ENCODE measurements at regions of chr5 and their contacts with region 1.

Region 1: DNA sequence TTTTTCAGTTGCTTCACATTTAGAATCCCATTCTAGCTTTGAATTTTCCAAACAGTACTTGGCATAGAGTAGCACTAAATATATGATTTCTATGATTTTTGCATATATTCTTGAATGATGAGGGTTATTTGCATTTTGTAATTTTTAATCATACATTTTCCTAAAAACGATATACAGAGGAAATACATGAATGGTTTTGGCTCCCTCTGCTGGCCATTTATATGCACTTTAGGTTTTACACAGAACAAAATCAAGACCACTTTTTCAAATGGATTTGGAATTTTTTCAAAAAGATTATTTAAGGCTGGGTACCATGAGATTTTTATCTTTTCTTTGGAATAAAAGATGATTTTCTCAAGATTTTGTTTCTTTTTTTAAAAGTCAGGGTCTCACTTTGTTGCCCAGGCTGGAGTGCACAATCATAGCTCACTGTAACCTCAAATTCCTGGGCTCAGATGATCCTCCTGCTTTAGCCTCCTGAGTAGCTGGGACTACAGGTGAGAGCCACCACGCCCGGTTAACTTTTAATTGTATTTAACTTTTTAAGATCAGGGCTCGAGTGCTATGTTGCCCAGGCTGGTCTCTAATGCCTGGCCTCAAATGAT is 16.7 kb upstream of the COMMD10 start:
- DNase-seq: peak; percentile 32
- H3K4me3 ChIP-seq: no peak overlapping the region; a peak in 1 of 4 replicates
- H3K27ac ChIP-seq: no peak overlapping the region
- H3K4me1 ChIP-seq: no peaks in the 10 kb centered on the region
- H3K27me3 ChIP-seq: no peaks in the 10 kb centered on the region
- CTCF ChIP-seq: peak; percentile 92
- EP300 ChIP-seq: no peak
- RAD21 ChIP-seq: peak; percentile 84

Region 2: DNA sequence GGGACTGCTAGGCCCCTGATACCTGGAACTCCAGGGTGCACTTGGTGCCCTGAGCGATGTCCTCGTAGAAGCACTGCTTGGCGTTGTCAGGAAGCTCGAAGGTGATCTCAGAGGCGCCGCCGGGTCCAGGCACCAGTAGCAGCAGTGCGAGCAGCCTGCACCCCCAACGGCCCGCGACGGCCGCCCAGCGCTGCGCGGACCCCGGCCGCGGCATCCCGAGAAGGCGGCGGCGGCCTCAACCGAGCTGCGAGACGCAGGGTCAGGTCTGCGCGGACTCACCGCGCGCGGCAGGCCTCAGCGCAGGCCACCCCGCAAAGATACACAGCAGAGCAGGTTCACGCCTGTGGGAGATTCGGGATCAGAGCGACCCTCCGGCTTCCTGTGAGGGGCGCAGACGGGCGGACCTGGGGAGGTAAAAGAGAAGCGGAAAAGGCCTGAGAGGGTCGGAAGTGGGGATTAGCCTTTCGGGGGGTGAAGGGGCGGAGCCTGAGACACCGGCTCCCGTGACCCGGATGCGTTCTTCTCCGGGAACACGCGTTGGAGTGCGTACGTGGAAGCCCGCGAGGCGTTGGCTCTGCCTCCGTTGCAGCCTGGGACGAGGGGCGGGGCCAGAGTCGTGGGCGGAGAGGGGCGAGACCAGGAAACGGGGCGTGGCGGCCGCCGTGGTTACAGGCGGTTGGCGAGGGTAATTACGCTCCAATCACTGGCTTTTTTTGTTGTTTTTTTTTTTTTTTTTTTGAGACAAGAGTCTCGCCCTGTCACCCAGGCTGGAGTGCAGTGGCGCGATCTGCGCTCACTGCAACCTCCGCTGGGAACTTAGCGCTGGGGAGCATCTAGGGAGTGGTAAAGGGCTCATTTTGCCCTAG is 442.3 kb before region 1 on chr5 and contains the start of gene TMED7:
- CTCF ChIA-PET with region 1: interaction called, 14 read pairs
- POLR2A ChIA-PET with region 1: no interaction called
- DNase-seq: peak; percentile 95
- H3K4me3 ChIP-seq: peak within 1 kb of the TSS; percentile 90 to 99
- H3K27ac ChIP-seq: peak within 1 kb of the TSS; percentile 93 to 94
- H3K4me1 ChIP-seq: peaks cover 16 to 21% of the 10 kb centered on the region in 2 experiments
- H3K27me3 ChIP-seq: no peaks in the 10 kb centered on the region
- CTCF ChIP-seq: no peak
- EP300 ChIP-seq: peak in 1 of 2 experiments; percentile 9; a peak in 1 of 4 replicates
- RAD21 ChIP-seq: no peak
- polyA plus RNA-seq, gene TMED7: 32.8 and 41.2 TPM in 2 replicates

Region 3: GRCh38 chr5:115641948-115642347 is 426.2 kb before region 1 on chr5:
- CTCF ChIA-PET with region 1: interaction called, 15 read pairs
- POLR2A ChIA-PET with region 1: no interaction called
- DNase-seq: no peak
- H3K4me3 ChIP-seq: no peak overlapping the region
- H3K27ac ChIP-seq: peak overlapping the region in 1 of 2 experiments; percentile 37; a peak in 1 of 4 replicates
- H3K4me1 ChIP-seq: no peaks in the 10 kb centered on the region; a peak in 1 of 4 replicates
- H3K27me3 ChIP-seq: no peaks in the 10 kb centered on the region
- CTCF ChIP-seq: no peak
- EP300 ChIP-seq: no peak
- RAD21 ChIP-seq: no peak

Region 4: GRCh38 chr5:115888027-115888426 is 180.1 kb before region 1 on chr5:
- CTCF ChIA-PET with region 1: interaction called, 21 read pairs
- POLR2A ChIA-PET with region 1: no interaction called
- DNase-seq: no peak
- H3K4me3 ChIP-seq: no peak overlapping the region
- H3K27ac ChIP-seq: no peak overlapping the region
- H3K4me1 ChIP-seq: no peaks in the 10 kb centered on the region
- H3K27me3 ChIP-seq: no peaks in the 10 kb centered on the region
- CTCF ChIP-seq: peak; percentile 58
- EP300 ChIP-seq: no peak
- RAD21 ChIP-seq: peak; percentile 59

Region 5: GRCh38 chr5:116035123-116035522 is 33.0 kb before region 1 on chr5:
- CTCF ChIA-PET with region 1: interaction called, 12 read pairs
- POLR2A ChIA-PET with region 1: no interaction called
- DNase-seq: no peak
- H3K4me3 ChIP-seq: no peak overlapping the region
- H3K27ac ChIP-seq: no peak overlapping the region
- H3K4me1 ChIP-seq: no peaks in the 10 kb centered on the region
- H3K27me3 ChIP-seq: no peaks in the 10 kb centered on the region; the same call in 1 of the 2 replicates
- CTCF ChIP-seq: no peak
- EP300 ChIP-seq: no peak
- RAD21 ChIP-seq: no peak

Region 6: GRCh38 chr5:116084871-116085715 is 17.0 kb after region 1 on chr5 and contains the start of gene COMMD10:
- CTCF ChIA-PET with region 1: interaction called, 18 read pairs
- POLR2A ChIA-PET with region 1: no interaction called
- DNase-seq: peak; percentile 86
- H3K4me3 ChIP-seq: peak within 1 kb of the TSS; percentile 69 to 84
- H3K27ac ChIP-seq: peak within 1 kb of the TSS; percentile 64 to 88
- H3K4me1 ChIP-seq: peaks cover 0 to 12% of the 10 kb centered on the region in 2 experiments; a peak in 2 of 4 replicates
- H3K27me3 ChIP-seq: no peaks in the 10 kb centered on the region
- CTCF ChIP-seq: no peak
- EP300 ChIP-seq: no peak
- RAD21 ChIP-seq: no peak
- polyA plus RNA-seq, gene COMMD10: 9.4 and 13.6 TPM in 2 replicates

Region 7: GRCh38 chr5:117077142-117077541 is 1009.0 kb after region 1 on chr5:
- CTCF ChIA-PET with region 1: no interaction called
- POLR2A ChIA-PET with region 1: no interaction called
- DNase-seq: no peak
- H3K4me3 ChIP-seq: peak overlapping the region in 1 of 2 experiments; percentile 13; a peak in 1 of 4 replicates
- H3K27ac ChIP-seq: no peak overlapping the region
- H3K4me1 ChIP-seq: no peaks in the 10 kb centered on the region
- H3K27me3 ChIP-seq: no peaks in the 10 kb centered on the region
- CTCF ChIP-seq: peak; percentile 29
- EP300 ChIP-seq: no peak
- RAD21 ChIP-seq: peak; percentile 40

Measured in SK-N-SH (cell line).